K562 (cell line): ENCODE measurements at regions of chr1 and their contacts with region 1.

Region 1: GRCh38 chr1:31846484-31846883 is 30.7 kb upstream of the SPOCD1 start:
- DNase-seq: no peak
- ATAC-seq: no peak
- H3K4me3 ChIP-seq: no peak overlapping the region
- H3K27ac ChIP-seq: no peak overlapping the region
- H3K4me1 ChIP-seq: no peaks in the 10 kb centered on the region; a peak in 1 of 5 replicates
- H3K27me3 ChIP-seq: no peaks in the 10 kb centered on the region
- CTCF ChIP-seq: no peak
- EP300 ChIP-seq: no peak
- POLR2A ChIP-seq: no peak
- RAD21 ChIP-seq: no peak

Region 2: DNA sequence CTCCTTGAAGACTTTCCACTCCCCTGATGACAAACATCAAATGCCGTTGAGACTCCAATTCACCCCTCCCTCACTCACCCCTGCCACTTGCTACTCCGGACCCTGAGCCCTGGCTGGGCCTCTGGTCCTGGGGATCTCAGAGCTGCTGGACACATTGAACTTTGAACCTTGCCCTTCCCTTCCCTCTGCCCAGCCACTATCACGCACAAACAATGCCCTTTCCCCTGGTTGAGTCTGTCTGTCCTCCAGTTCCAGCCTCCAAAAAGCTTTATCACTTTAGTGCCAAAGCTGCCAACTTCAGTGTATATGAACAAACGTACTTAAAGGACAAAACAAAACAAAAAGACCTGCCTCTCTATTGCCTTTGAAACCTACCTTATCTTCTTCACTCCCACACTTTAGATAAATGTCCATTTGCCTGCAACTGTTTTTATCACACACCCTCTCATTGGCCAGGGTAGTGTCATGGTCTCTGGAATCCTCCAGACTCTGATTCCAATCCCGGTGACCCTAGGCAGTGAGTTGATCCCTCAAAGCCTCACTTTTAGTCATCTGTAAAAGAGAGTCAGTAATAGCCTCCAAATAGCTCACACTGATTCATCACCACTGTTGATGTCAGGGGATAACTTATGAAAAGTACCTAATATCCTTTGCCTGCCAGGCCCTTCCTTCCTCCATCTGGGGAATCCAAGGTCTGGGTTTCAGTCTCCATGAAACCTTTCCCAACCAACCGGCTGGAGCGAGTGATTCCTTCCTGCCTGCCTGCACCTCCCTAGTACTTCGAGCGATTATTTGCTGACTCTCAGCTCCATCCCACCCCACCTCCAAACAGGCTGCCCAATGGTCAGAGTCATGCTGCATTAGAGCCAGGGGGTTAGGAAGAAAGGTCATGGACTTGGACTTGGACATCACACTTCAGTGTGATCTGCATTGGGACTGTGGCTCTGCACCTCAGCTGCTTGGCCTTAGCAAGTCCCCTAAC is 14.8 kb before region 1 on chr1:
- CTCF ChIA-PET with region 1: no interaction called
- POLR2A ChIA-PET with region 1: interaction called, 11 read pairs
- in situ Hi-C with region 1: no loop called
- intact Hi-C with region 1: no loop called
- DNase-seq: peak in 1 of 4 experiments; percentile 16
- ATAC-seq: no peak
- H3K4me3 ChIP-seq: no peak overlapping the region
- H3K27ac ChIP-seq: no peak overlapping the region
- H3K4me1 ChIP-seq: peaks cover 18 to 32% of the 10 kb centered on the region in 2 experiments; a peak in 4 of 5 replicates
- H3K27me3 ChIP-seq: no peaks in the 10 kb centered on the region; a peak in 1 of 5 replicates
- CTCF ChIP-seq: no peak
- EP300 ChIP-seq: no peak
- POLR2A ChIP-seq: no peak
- RAD21 ChIP-seq: no peak